Activated naive CD4-positive, alpha-beta T cell treated with anti-CD3 and anti-CD28 coated beads for 36 hours (primary cell): ENCODE measurements at regions of chr13 and their contacts with region 1.

Region 1: DNA sequence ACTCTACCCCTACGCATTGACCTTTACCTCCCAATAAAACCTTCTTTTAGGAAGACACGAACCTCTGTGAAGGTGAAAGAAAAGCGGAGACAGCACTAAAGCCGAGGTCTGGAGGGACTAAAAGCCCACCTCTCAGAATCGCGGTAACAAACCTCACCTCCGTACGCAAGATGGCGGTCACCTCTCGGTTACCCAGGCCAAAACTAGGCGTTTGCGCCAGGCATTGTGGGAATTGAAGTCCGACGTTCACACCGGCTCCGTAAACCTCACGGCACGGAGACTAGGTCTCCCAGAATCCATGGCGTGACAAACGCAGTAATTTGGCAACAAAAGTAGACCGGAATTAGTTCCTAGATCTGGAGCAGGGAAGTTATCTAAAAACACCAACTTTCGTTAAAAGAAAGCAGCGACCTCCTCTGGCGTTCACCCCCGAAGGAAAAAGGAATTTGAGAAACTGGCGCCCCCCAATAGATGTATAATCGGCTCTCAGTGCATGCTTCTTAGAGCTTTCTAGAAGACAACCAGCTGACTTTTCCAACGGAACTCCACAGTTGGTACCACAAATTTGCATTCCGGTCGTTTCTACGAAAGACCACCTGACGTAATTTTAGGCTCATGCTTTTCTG is at the start of gene N4BP2L2:
- DNase-seq: peak; percentile 96
- H3K4me3 Mint-ChIP-seq: peak within 1 kb of the TSS; percentile 97
- H3K27ac Mint-ChIP-seq: peak within 1 kb of the TSS; percentile 99
- H3K4me1 Mint-ChIP-seq: peaks cover 37% of the 10 kb centered on the region
- H3K27me3 Mint-ChIP-seq: no peaks in the 10 kb centered on the region
- total RNA-seq, gene N4BP2L2: 81.1 to 82.3 TPM

Region 2: DNA sequence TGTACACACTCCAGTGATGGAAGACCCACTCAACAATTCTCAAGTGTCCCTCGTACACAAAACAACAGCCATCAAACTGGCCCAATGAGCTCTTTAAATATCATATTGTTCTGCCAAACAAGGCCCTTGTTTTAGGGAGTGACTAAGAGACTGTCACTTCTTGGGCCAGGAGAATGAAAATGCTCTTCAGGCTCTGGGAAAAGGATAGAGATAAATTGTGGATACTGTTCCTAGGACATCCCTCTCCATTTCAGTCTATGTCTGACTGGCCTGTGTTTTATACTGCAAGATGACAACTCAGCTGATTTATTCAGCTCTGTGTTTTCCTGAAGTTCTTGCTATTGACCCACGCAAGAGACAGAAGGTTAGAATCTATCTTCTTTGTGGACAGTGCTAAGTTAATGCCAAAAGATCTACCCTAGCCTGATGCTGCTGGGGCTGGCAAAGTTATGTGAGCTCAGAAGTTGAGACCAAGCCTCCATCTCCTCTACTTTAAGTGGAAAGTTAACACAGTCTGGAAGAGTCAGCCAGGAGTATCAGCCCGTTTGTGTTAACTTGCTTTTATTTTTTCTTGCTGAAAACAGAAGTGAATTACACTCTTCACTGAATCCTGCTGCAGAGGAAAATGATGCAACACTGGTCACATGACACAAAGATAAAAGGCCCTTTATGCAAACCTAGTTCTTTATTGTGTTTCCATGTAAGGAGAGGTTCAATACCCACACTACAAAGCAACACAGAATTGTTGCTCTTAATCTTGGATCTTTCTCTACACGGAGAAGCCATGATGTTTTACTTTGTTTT is 492.6 kb before region 1 on chr13:
- CTCF ChIA-PET with region 1: no interaction called
- intact Hi-C with region 1: loop called (anchors 2 kb)
- DNase-seq: peak; percentile 61
- H3K4me3 Mint-ChIP-seq: peak overlapping the region; percentile 55
- H3K27ac Mint-ChIP-seq: peak overlapping the region; percentile 93
- H3K4me1 Mint-ChIP-seq: peaks cover 69% of the 10 kb centered on the region
- H3K27me3 Mint-ChIP-seq: no peaks in the 10 kb centered on the region

Region 3: GRCh38 chr13:32427852-32428580 is 110.7 kb before region 1 on chr13 and contains the start of gene N4BP2L1:
- CTCF ChIA-PET with region 1: interaction called, 3 read pairs
- intact Hi-C with region 1: loop called (anchors 1 kb)
- DNase-seq: peak; percentile 95
- H3K4me3 Mint-ChIP-seq: peak within 1 kb of the TSS; percentile 94
- H3K27ac Mint-ChIP-seq: peak within 1 kb of the TSS; percentile 97
- H3K4me1 Mint-ChIP-seq: peaks cover 31% of the 10 kb centered on the region
- H3K27me3 Mint-ChIP-seq: no peaks in the 10 kb centered on the region
- total RNA-seq, gene N4BP2L1: 22.6 TPM

Region 4: DNA sequence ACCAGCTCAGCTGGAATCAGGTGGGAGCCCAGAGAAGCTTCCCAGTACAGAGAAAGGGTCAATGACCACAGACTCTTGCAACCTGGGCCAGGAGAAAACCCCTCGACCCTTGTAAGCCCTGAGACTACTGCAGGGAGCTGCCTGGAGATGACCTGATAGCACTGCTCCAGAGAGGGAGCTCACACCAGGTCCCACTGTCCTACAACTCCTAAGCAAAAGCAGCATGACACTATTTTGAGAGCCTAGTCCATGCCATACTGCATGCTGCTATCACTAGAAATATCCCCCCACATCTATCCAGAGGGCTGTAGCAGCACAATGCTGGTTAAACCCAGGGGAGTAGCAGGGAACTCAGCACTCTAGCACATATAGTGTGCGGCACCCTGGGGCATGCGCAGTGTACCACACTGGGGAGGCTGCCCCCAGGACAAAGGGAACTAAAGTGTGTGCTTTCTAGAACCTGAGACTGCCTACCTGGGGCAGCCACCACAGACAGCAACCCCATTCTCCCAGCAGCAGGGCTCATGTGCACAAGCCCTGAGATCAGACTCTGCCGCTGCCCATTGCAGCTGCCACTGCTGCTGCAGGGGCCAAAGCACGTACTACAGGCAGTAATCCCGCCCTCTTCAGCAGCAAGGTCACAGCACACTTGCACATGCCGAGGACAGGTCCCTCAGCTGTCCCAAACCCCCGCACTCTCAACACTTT is 83.7 kb before region 1 on chr13:
- CTCF ChIA-PET with region 1: no interaction called
- intact Hi-C with region 1: no loop called
- DNase-seq: no peak
- H3K4me3 Mint-ChIP-seq: no peak overlapping the region
- H3K27ac Mint-ChIP-seq: no peak overlapping the region
- H3K4me1 Mint-ChIP-seq: no peaks in the 10 kb centered on the region
- H3K27me3 Mint-ChIP-seq: no peaks in the 10 kb centered on the region

Region 5: DNA sequence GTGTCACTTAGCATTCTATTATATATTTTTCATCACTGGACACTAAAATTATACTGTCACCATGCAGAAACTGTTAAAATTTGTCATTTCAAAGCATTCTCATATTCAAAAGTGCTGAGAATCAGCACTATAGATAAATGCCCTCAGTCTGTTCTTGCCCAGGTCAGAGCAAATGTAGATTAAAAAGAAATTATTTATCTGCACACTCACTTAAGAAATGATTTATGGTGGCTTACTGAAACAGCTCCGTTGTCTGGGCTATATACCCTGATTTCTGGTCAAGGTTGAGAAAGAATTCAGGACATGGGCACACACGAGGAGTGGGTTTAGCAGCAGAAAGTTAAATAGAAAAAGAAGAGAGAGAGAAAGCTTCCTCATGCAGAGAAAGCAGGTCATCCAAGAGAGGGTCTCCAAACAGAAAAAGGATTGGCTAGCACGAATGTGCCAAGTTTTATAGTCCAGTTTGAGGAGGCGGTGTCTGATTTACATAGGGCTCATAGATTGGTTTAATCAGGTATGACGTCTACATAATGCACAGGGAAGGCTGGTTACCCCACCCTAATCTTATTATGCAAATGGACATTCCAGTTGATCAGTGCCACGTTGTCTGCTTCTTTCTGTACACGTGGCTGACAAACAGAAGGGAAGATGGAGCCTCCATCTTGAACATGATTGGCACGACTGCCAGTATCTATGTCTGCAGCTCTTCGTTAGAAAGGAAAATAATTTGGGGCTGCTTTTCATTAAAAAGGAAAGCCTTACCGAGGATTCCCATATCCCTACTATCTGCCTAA is 63.5 kb before region 1 on chr13:
- CTCF ChIA-PET with region 1: no interaction called
- intact Hi-C with region 1: no loop called
- DNase-seq: no peak
- H3K4me3 Mint-ChIP-seq: no peak overlapping the region
- H3K27ac Mint-ChIP-seq: no peak overlapping the region
- H3K4me1 Mint-ChIP-seq: peaks cover 3% of the 10 kb centered on the region
- H3K27me3 Mint-ChIP-seq: no peaks in the 10 kb centered on the region

Region 6: DNA sequence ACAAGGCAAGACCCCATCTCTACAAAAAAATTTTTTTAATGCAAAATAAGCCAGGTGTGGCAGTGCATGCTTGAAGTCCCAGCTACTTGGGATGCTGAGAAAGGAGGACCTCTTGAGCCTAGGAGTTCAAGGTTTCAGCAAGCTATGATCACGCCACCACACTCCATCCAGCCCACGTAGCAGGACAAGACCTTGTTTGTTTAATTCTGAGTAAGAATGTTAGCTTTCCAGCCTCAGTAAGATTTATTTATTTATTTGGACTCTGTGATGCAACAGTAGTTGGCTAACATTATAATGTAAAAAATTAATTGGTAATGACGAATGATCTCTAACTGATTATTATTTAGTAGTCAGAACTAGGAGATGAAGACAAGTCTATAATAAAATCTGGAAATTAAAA is 23.5 kb before region 1 on chr13:
- CTCF ChIA-PET with region 1: no interaction called
- intact Hi-C with region 1: loop called (anchors 1 kb)
- DNase-seq: no peak
- H3K4me3 Mint-ChIP-seq: no peak overlapping the region
- H3K27ac Mint-ChIP-seq: no peak overlapping the region
- H3K4me1 Mint-ChIP-seq: peaks cover 9% of the 10 kb centered on the region
- H3K27me3 Mint-ChIP-seq: no peaks in the 10 kb centered on the region

Region 7: GRCh38 chr13:32639502-32640105 is 100.9 kb after region 1 on chr13:
- CTCF ChIA-PET with region 1: no interaction called
- intact Hi-C with region 1: loop called (anchors 1 kb)
- DNase-seq: peak; percentile 64
- H3K4me3 Mint-ChIP-seq: no peak overlapping the region
- H3K27ac Mint-ChIP-seq: no peak overlapping the region
- H3K4me1 Mint-ChIP-seq: peaks cover 31% of the 10 kb centered on the region
- H3K27me3 Mint-ChIP-seq: no peaks in the 10 kb centered on the region

Region 8: GRCh38 chr13:32863596-32863995 is 324.9 kb after region 1 on chr13:
- CTCF ChIA-PET with region 1: no interaction called
- intact Hi-C with region 1: no loop called
- DNase-seq: no peak
- H3K4me3 Mint-ChIP-seq: no peak overlapping the region
- H3K27ac Mint-ChIP-seq: no peak overlapping the region
- H3K4me1 Mint-ChIP-seq: no peaks in the 10 kb centered on the region
- H3K27me3 Mint-ChIP-seq: no peaks in the 10 kb centered on the region

Region 9: DNA sequence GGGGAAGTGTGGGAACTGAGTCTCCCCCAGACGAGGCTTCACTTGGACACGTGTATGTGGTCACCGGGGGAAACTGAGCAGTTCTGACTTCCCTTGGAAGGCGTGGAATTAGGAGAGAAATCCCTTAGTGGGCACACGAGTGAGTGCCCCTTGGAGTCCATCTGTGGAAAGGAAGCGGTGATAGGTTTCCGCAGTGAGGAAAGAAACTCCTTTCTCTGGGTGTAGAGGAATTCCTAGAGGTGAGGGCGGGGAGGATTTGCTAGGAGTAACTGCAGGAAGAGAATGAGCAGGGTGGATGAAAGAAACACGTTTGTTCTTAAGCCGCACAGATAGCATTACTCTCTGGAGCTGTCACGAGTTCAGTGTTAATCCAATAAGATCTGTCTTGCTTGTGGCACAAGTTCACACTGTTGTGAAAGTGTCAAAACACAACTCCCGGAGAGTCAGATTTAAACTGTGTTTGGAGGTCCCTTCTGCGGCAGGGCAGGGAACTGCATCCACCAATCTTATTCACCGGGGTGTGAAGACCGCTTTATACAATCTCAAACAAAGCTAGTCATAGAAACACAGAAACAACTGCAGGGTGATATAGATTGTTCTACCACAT is 478.7 kb after region 1 on chr13:
- CTCF ChIA-PET with region 1: no interaction called
- intact Hi-C with region 1: loop called (anchors 1 kb)
- DNase-seq: peak; percentile 79
- H3K4me3 Mint-ChIP-seq: peak overlapping the region; percentile 64
- H3K27ac Mint-ChIP-seq: peak overlapping the region; percentile 7
- H3K4me1 Mint-ChIP-seq: peaks cover 9% of the 10 kb centered on the region
- H3K27me3 Mint-ChIP-seq: peaks cover 59% of the 10 kb centered on the region